HEK293T (cell line): ENCODE measurements at regions of chr2 and their contacts with region 1.

Region 1: DNA sequence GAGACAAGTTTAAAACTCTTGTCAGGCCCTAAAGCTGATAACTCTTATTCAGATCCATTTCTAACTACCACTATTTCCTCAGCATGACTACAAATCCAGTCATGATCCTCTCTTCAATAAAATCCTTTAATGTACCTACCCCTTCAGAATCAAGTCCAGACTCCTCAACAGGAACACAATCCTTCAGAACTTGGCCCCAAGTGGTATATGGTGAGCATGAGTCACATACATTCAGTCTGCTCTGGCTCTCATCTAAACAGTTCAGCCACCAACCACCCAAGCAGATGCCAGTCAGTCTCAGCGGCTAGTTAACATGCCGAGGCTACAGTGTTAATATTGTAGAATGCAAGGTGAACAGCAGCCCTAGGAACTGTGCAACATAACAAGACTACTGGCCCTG is 9.7 kb downstream of the LMAN2L start:
- DNase-seq: no peak

Region 2: GRCh38 chr2:96618604-96619283 is 111.5 kb before region 1 on chr2:
- CTCF ChIA-PET with region 1: interaction called, 11 read pairs
- POLR2A ChIA-PET with region 1: no interaction called
- DNase-seq: no peak

Region 3: GRCh38 chr2:96715658-96716057 is 14.6 kb before region 1 on chr2:
- CTCF ChIA-PET with region 1: interaction called, 10 read pairs
- POLR2A ChIA-PET with region 1: no interaction called
- DNase-seq: no peak